CD8-positive, alpha-beta T cell (primary cell): ENCODE measurements at regions of chr2 and their contacts with region 1.

Region 1: GRCh38 chr2:61993444-61994024 is 88.1 kb downstream of the COMMD1 start:
- DNase-seq: peak in 3 of 9 experiments; percentile 13 to 64 (median 48)
- ATAC-seq: no peak
- H3K4me3 ChIP-seq: no peak overlapping the region
- H3K4me3 Mint-ChIP-seq: no peak overlapping the region
- H3K27ac ChIP-seq: no peak overlapping the region
- H3K27ac Mint-ChIP-seq: no peak overlapping the region
- H3K4me1 ChIP-seq: no peaks in the 10 kb centered on the region
- H3K4me1 Mint-ChIP-seq: no peaks in the 10 kb centered on the region
- H3K27me3 ChIP-seq: no peaks in the 10 kb centered on the region
- H3K27me3 Mint-ChIP-seq: no peaks in the 10 kb centered on the region
- CTCF ChIP-seq: peak; percentile 63

Region 2: GRCh38 chr2:62055724-62056336 is 62.3 kb after region 1 on chr2:
- CTCF ChIA-PET with region 1: no interaction called
- POLR2A ChIA-PET with region 1: no interaction called
- intact Hi-C with region 1: no loop called
- DNase-seq: no peak
- ATAC-seq: no peak
- H3K4me3 ChIP-seq: no peak overlapping the region
- H3K4me3 Mint-ChIP-seq: no peak overlapping the region
- H3K27ac ChIP-seq: no peak overlapping the region
- H3K27ac Mint-ChIP-seq: no peak overlapping the region
- H3K4me1 ChIP-seq: no peaks in the 10 kb centered on the region
- H3K4me1 Mint-ChIP-seq: peaks cover 14% of the 10 kb centered on the region
- H3K27me3 ChIP-seq: no peaks in the 10 kb centered on the region
- H3K27me3 Mint-ChIP-seq: no peaks in the 10 kb centered on the region
- CTCF ChIP-seq: no peak

Region 3: DNA sequence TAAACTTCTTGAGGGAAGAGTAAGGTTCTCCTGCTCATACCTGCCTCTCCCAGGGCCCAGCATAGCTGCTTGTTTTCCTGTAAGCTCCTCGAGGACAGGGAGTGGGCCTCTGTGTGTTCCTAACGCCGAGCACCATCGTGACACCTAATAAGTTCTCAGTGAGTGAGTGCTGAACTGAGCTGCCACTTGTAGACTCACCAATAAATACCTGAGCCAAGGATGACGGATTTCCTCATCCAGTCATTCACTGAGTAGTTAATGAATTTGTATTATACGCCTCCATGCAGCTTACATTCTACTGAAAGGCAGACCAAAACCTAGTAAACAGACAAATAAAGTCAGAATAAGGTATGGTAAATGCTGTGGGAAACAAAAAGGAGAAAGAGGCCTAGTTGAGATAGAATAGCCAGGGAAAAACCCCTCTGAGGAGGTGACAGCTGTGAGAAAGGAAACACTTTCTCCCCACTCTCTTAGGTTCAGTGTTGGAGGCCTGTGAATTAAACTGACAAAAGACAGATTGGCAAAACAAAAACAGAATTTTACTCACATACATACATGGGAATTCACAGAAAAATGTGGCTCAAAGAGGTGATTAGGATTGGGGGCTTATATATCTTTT is 341.0 kb after region 1 on chr2:
- CTCF ChIA-PET with region 1: interaction called, 3 read pairs
- POLR2A ChIA-PET with region 1: no interaction called
- intact Hi-C with region 1: loop called in 1 of 2 experiments (anchors 5 kb)
- DNase-seq: peak in 1 of 9 experiments; percentile 28
- ATAC-seq: no peak
- H3K4me3 ChIP-seq: no peak overlapping the region
- H3K4me3 Mint-ChIP-seq: no peak overlapping the region
- H3K27ac ChIP-seq: no peak overlapping the region
- H3K27ac Mint-ChIP-seq: peak overlapping the region; percentile 45
- H3K4me1 ChIP-seq: no peaks in the 10 kb centered on the region
- H3K4me1 Mint-ChIP-seq: peaks cover 5% of the 10 kb centered on the region
- H3K27me3 ChIP-seq: no peaks in the 10 kb centered on the region
- H3K27me3 Mint-ChIP-seq: no peaks in the 10 kb centered on the region
- CTCF ChIP-seq: no peak